H1 (cell line): ENCODE measurements at regions of chr5 and their contacts with region 1.

Region 1: GRCh38 chr5:147369742-147370374 is 135.0 kb downstream of the STK32A start:
- DNase-seq: no peak
- H3K4me3 ChIP-seq: no peak overlapping the region
- H3K27ac ChIP-seq: no peak overlapping the region
- H3K4me1 ChIP-seq: no peaks in the 10 kb centered on the region
- H3K27me3 ChIP-seq: no peaks in the 10 kb centered on the region
- CTCF ChIP-seq: peak in 2 of 3 experiments; percentile 49 to 51; a peak in 2 of 4 replicates
- EP300 ChIP-seq: no peak
- POLR2A ChIP-seq: no peak
- RAD21 ChIP-seq: peak; percentile 80 to 89

Region 2: GRCh38 chr5:147216552-147217154 is 153.2 kb before region 1 on chr5:
- CTCF ChIA-PET with region 1: interaction called, 13 read pairs
- POLR2A ChIA-PET with region 1: no interaction called
- DNase-seq: peak in 1 of 2 experiments; percentile 52
- H3K4me3 ChIP-seq: no peak overlapping the region
- H3K27ac ChIP-seq: no peak overlapping the region
- H3K4me1 ChIP-seq: peaks cover 6 to 10% (median 9%) of the 10 kb centered on the region in 4 experiments
- H3K27me3 ChIP-seq: no peaks in the 10 kb centered on the region
- CTCF ChIP-seq: no peak
- EP300 ChIP-seq: no peak
- POLR2A ChIP-seq: no peak; a peak in 1 of 3 replicates
- RAD21 ChIP-seq: no peak

Region 3: GRCh38 chr5:147223948-147224791 is 145.7 kb before region 1 on chr5:
- CTCF ChIA-PET with region 1: interaction called, 94 read pairs
- POLR2A ChIA-PET with region 1: no interaction called
- DNase-seq: no peak
- H3K4me3 ChIP-seq: no peak overlapping the region
- H3K27ac ChIP-seq: no peak overlapping the region
- H3K4me1 ChIP-seq: peaks cover 0 to 2% (median 0%) of the 10 kb centered on the region in 4 experiments; a peak in 4 of 7 replicates
- H3K27me3 ChIP-seq: no peaks in the 10 kb centered on the region
- CTCF ChIP-seq: peak in 2 of 3 experiments; percentile 53 to 73; a peak in 3 of 4 replicates
- EP300 ChIP-seq: no peak
- POLR2A ChIP-seq: no peak
- RAD21 ChIP-seq: peak; percentile 90 to 93

Region 4: DNA sequence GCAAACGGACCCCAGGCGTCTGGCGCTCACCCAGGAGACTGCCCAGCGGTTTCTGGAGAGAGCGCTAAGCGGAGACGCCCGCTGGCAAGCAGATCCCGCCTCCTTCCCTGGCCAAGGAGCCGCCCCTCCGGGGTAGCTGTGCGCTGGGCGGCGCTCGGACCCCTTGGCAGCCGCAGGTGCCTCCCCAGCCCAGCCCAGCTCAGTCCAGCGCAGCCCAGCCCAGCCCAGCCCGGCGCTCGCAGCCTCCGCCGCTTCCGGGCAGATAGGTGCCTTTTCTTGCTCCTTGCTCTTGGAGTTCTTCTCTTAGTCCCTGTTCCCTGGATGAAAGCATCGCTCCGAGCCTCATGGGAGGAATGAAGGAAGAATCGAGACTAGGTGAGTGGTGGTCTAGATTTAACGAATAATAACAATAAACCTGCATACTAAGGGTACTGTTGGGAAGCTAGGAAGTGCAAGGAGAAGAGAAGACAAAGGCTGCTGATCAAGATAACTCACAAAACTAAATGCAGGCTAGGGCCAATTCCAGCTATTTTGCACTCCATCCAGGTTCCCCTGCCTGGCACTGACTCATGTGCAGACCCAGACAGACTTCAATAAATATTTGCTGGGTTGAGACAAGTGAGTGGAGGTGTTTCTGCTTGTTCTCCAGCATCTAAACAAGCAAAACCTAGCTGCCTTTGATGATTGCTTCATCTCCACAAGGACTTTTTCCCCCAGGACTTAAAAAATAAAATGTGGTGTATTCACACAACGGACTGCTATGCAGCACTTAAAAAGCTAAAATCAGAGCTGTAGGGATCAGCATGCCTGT is 134.8 kb before region 1 on chr5 and contains the start of gene STK32A:
- CTCF ChIA-PET with region 1: interaction called, 10 read pairs
- POLR2A ChIA-PET with region 1: interaction called, 3 read pairs
- DNase-seq: peak; percentile 59 to 88
- H3K4me3 ChIP-seq: peak within 1 kb of the TSS; percentile 60 to 76 (median 68)
- H3K27ac ChIP-seq: no peak within 1 kb of the TSS
- H3K4me1 ChIP-seq: peaks cover 0 to 3% (median 0%) of the 10 kb centered on the region in 4 experiments; a peak in 2 of 7 replicates
- H3K27me3 ChIP-seq: peaks cover 2 to 26% (median 5%) of the 10 kb centered on the region in 4 experiments
- CTCF ChIP-seq: peak in 2 of 3 experiments; percentile 46 to 60; a peak in 3 of 4 replicates
- EP300 ChIP-seq: no peak
- POLR2A ChIP-seq: peak; percentile 44 to 69
- RAD21 ChIP-seq: peak; percentile 68 to 81
- total RNA-seq, gene STK32A: 1.5 and 2.5 TPM in 2 replicates

Region 5: DNA sequence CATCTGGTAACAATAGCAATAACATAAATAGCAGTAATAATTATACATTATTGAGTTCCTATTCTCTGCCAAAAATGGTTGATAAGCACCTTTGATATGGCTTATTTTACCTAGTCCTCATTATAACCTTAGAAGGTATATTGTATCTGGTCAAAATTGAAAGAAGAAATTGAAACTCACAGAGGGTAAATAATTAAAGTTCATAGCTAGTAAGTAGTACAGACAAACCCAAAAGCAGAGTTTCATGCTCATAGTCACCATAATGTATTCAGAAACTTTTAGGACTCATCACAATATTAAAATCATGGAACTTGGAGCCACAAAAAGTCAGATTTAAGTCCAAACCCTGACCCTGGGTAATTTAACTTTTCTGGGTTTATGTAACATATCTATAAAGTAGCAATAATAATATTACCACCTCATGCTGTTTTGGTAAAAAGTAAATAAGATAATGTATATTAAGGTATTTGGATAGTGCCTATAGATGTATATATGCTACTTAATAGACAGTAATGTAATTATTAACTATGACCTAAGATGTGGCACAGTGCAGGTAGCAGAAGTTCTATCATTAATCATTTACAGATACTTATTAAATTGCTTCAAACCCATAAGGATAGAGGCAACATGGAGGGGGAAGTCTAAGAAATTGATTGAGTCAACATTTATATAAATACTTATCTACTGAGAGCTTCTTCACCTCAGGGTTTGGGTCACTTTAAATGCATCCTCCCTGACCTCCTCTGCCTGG is 102.6 kb before region 1 on chr5:
- CTCF ChIA-PET with region 1: no interaction called
- POLR2A ChIA-PET with region 1: no interaction called
- DNase-seq: no peak
- H3K4me3 ChIP-seq: no peak overlapping the region
- H3K27ac ChIP-seq: no peak overlapping the region
- H3K4me1 ChIP-seq: no peaks in the 10 kb centered on the region
- H3K27me3 ChIP-seq: no peaks in the 10 kb centered on the region
- CTCF ChIP-seq: no peak
- EP300 ChIP-seq: no peak
- POLR2A ChIP-seq: no peak
- RAD21 ChIP-seq: no peak

Region 6: DNA sequence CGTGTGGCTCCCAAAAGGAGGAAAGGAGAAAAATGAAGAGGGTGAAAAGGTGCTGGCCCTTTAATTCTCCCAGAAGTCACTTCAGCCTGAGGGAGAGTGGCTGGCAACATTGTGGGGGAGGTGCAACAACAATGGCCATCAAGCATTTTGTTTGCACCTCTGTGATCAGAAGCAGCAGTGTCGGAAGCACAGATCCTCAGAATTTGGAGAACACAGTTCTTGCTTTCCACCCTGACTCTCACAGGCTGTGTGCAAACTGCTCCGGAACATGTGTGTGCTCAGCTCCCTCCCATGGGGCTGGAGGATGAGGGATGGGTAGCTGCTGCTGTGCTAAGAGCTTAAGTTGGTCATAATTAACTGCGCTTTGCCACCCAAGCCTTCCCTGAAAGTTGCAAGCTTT is 12.9 kb after region 1 on chr5:
- CTCF ChIA-PET with region 1: interaction called, 11 read pairs
- POLR2A ChIA-PET with region 1: no interaction called
- DNase-seq: no peak
- H3K4me3 ChIP-seq: no peak overlapping the region
- H3K27ac ChIP-seq: peak overlapping the region; percentile 37; the same call in 1 of the 2 replicates
- H3K4me1 ChIP-seq: peaks cover 2 to 10% (median 8%) of the 10 kb centered on the region in 4 experiments; a peak in 5 of 7 replicates
- H3K27me3 ChIP-seq: no peaks in the 10 kb centered on the region; a peak in 1 of 7 replicates
- CTCF ChIP-seq: no peak
- EP300 ChIP-seq: no peak
- POLR2A ChIP-seq: no peak
- RAD21 ChIP-seq: no peak

Region 7: DNA sequence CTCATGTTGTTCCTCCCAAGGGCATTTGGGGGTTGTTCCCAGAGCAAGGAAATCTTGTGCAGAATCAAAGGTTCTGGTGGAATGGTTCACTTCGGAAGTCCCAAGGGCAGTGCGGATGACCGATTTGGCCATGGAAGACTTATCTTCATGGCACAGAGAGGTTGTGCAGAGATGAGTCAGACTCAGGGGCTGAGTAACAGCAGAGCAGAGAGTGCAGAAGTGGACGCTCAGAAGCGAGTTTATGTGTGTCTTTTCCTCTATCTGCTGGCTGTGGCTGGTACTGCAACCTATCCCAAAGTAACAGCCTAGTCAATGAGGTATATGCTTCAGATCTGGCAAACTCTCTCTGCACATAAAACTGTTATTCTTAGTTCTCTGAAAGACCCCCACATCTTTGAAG is 21.9 kb after region 1 on chr5:
- CTCF ChIA-PET with region 1: interaction called, 18 read pairs
- POLR2A ChIA-PET with region 1: no interaction called
- DNase-seq: no peak
- H3K4me3 ChIP-seq: no peak overlapping the region
- H3K27ac ChIP-seq: no peak overlapping the region
- H3K4me1 ChIP-seq: peaks cover 4 to 10% (median 8%) of the 10 kb centered on the region in 4 experiments; a peak in 5 of 7 replicates
- H3K27me3 ChIP-seq: no peaks in the 10 kb centered on the region; a peak in 1 of 7 replicates
- CTCF ChIP-seq: peak; percentile 2 to 67 (median 16); a peak in 3 of 4 replicates
- EP300 ChIP-seq: no peak
- POLR2A ChIP-seq: peak in 1 of 2 experiments; percentile 45; a peak in 1 of 3 replicates
- RAD21 ChIP-seq: peak; percentile 50 to 65